Activated CD4-positive, alpha-beta memory T cell treated with anti-CD3 and anti-CD28 coated beads for 36 hours (primary cell): ENCODE measurements at regions of chr7 and their contacts with region 1.

Region 1: GRCh38 chr7:129825496-129826267 is 127.1 kb downstream of the UBE2H start:
- DNase-seq: peak; percentile 92
- H3K4me3 Mint-ChIP-seq: peak overlapping the region; percentile 89
- H3K27ac Mint-ChIP-seq: no peak overlapping the region
- H3K4me1 Mint-ChIP-seq: peaks cover 18% of the 10 kb centered on the region
- H3K27me3 Mint-ChIP-seq: no peaks in the 10 kb centered on the region

Region 2: GRCh38 chr7:128710481-128710880 is 1115.2 kb before region 1 on chr7:
- CTCF ChIA-PET with region 1: no interaction called
- POLR2A ChIA-PET with region 1: no interaction called
- intact Hi-C with region 1: no loop called
- DNase-seq: no peak
- H3K4me3 Mint-ChIP-seq: no peak overlapping the region
- H3K27ac Mint-ChIP-seq: no peak overlapping the region
- H3K4me1 Mint-ChIP-seq: no peaks in the 10 kb centered on the region
- H3K27me3 Mint-ChIP-seq: peaks cover 5% of the 10 kb centered on the region

Region 3: GRCh38 chr7:129343099-129343700 is 482.5 kb before region 1 on chr7:
- CTCF ChIA-PET with region 1: interaction called, 12 read pairs
- POLR2A ChIA-PET with region 1: no interaction called
- intact Hi-C with region 1: loop called (anchors 5 kb)
- DNase-seq: no peak
- H3K4me3 Mint-ChIP-seq: no peak overlapping the region
- H3K27ac Mint-ChIP-seq: no peak overlapping the region
- H3K4me1 Mint-ChIP-seq: peaks cover 30% of the 10 kb centered on the region
- H3K27me3 Mint-ChIP-seq: no peaks in the 10 kb centered on the region

Region 4: GRCh38 chr7:129611246-129612111 is 214.2 kb before region 1 on chr7 and contains the start of gene NRF1:
- CTCF ChIA-PET with region 1: interaction called, 6 read pairs
- POLR2A ChIA-PET with region 1: interaction called, 3 read pairs
- intact Hi-C with region 1: loop called (anchors 2 kb)
- DNase-seq: peak; percentile 92
- H3K4me3 Mint-ChIP-seq: peak within 1 kb of the TSS; percentile 95
- H3K27ac Mint-ChIP-seq: peak within 1 kb of the TSS; percentile 97
- H3K4me1 Mint-ChIP-seq: peaks cover 53% of the 10 kb centered on the region
- H3K27me3 Mint-ChIP-seq: no peaks in the 10 kb centered on the region
- total RNA-seq, gene NRF1: 19.9 to 20.4 TPM

Region 5: GRCh38 chr7:129739427-129739826 is 86.3 kb before region 1 on chr7:
- CTCF ChIA-PET with region 1: interaction called, 11 read pairs
- POLR2A ChIA-PET with region 1: no interaction called
- intact Hi-C with region 1: no loop called
- DNase-seq: no peak
- H3K4me3 Mint-ChIP-seq: no peak overlapping the region
- H3K27ac Mint-ChIP-seq: no peak overlapping the region
- H3K4me1 Mint-ChIP-seq: peaks cover 6% of the 10 kb centered on the region
- H3K27me3 Mint-ChIP-seq: no peaks in the 10 kb centered on the region

Region 6: DNA sequence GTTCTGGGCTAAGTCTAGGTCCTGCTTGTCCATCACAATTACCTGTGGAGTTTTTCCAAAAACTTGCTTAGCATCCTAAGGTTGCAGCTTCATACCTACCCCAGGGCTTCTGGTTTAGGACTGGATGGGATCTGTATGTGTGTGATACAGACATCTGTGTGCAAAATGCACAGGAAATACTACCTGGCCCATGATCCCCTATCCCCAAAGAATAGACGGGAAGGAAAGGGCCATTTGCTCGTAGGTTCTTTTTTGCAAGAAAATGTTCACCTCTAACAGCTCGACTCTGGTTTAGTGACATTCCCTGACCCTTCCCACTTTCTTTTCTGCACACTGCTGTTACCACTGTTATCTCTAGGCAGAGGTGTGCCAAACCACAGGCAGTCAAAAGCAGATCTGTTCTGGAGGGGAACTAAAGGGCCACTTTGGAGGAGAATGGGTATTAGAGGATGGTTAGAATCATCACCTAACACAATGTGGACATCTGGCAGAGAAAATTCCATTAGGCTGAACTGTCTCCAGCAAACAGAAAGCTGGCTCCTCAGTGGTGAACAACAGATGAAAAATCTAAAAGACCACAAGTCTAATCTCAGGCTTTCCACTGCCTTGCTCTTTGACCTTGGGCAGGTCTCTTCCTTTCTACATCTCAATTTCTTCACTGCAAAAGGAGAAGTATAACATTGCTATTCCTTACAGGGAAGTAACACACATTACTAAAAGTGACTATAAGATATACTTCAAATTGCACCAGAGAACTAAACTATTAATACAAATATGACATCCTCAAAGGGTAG is 19.7 kb after region 1 on chr7:
- CTCF ChIA-PET with region 1: interaction called, 42 read pairs
- POLR2A ChIA-PET with region 1: interaction called, 3 read pairs
- intact Hi-C with region 1: no loop called
- DNase-seq: no peak
- H3K4me3 Mint-ChIP-seq: no peak overlapping the region
- H3K27ac Mint-ChIP-seq: no peak overlapping the region
- H3K4me1 Mint-ChIP-seq: peaks cover 50% of the 10 kb centered on the region
- H3K27me3 Mint-ChIP-seq: no peaks in the 10 kb centered on the region

Region 7: DNA sequence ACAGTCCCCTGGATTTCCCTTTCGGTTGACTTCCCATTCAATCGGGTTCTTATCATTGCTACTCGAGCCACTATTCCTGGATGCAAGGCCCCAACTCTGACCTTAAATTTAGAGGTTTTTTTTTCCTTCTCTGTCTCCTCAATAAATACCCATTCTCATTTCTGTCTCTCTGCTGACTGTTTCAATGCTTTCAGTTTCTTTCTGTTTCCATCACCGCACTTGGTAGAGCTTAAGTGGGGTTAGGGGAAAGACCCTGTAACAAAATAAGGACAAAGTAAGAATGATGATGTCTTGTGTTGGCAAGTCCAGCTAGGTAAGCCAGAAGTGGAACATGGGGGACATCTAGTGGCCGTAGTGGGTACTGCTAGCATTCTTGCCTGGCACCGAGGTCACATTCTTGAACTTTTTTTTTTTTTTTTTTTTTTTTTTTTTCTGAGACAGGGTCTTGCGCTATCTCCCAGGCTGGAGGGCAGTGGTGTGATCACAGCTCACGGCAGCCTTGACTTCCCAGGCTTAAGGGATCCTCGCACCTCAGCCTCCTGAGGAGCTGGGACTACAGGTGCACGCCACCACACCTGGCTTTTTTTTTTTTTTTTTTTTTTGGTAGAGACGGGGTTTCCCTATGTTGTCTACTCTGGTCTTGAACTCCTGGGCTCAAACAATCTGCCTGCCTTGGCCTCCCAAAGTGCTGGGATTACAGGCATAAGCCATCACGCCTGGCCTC is 185.2 kb after region 1 on chr7:
- CTCF ChIA-PET with region 1: interaction called, 58 read pairs
- POLR2A ChIA-PET with region 1: no interaction called
- intact Hi-C with region 1: loop called (anchors 1 kb)
- DNase-seq: peak; percentile 94
- H3K4me3 Mint-ChIP-seq: no peak overlapping the region
- H3K27ac Mint-ChIP-seq: peak overlapping the region; percentile 70
- H3K4me1 Mint-ChIP-seq: peaks cover 12% of the 10 kb centered on the region
- H3K27me3 Mint-ChIP-seq: no peaks in the 10 kb centered on the region